ENCODE measurements at regions of chr4 and their contacts with region 1.

Region 1: GRCh38 chr4:105215609-105216313 is 69.1 kb downstream of the TET2 start:
- DNase-seq: no peak
- ATAC-seq: no peak
- H3K4me3 Mint-ChIP-seq: no peak overlapping the region
- H3K27ac Mint-ChIP-seq: no peak overlapping the region
- H3K4me1 Mint-ChIP-seq: peaks cover 18% of the 10 kb centered on the region
- H3K27me3 Mint-ChIP-seq: no peaks in the 10 kb centered on the region
- CTCF ChIP-seq: no peak

Region 2: GRCh38 chr4:105257826-105258495 is 42.2 kb after region 1 on chr4:
- CTCF ChIA-PET with region 1: no interaction called
- POLR2A ChIA-PET with region 1: no interaction called
- intact Hi-C with region 1: loop called (anchors 5 kb)
- DNase-seq: no peak
- ATAC-seq: no peak
- H3K4me3 Mint-ChIP-seq: no peak overlapping the region
- H3K27ac Mint-ChIP-seq: no peak overlapping the region
- H3K4me1 Mint-ChIP-seq: no peaks in the 10 kb centered on the region
- H3K27me3 Mint-ChIP-seq: no peaks in the 10 kb centered on the region
- CTCF ChIP-seq: no peak